Spleen (tissue), 13 donors: ENCODE measurements at regions of chr3 and their contacts with region 1.

Region 1: GRCh38 chr3:186783073-186783730 is at the start of gene EIF4A2:
- DNase-seq: peak; percentile 97
- H3K4me3 ChIP-seq: peak within 1 kb of the TSS; percentile 66 to 94 (median 88)
- H3K27ac ChIP-seq: peak within 1 kb of the TSS; percentile 95 to 99 (median 98)
- H3K4me1 ChIP-seq: peaks cover 35 to 49% (median 40%) of the 10 kb centered on the region in 6 donors
- H3K27me3 ChIP-seq: no peaks in the 10 kb centered on the region
- CTCF ChIP-seq: peak in 1 of 11 experiments; percentile 5
- POLR2A ChIP-seq: peak; percentile 87 to 89 (median 87)
- total RNA-seq, gene EIF4A2: 255 to 512 (median 355) TPM

Region 2: DNA sequence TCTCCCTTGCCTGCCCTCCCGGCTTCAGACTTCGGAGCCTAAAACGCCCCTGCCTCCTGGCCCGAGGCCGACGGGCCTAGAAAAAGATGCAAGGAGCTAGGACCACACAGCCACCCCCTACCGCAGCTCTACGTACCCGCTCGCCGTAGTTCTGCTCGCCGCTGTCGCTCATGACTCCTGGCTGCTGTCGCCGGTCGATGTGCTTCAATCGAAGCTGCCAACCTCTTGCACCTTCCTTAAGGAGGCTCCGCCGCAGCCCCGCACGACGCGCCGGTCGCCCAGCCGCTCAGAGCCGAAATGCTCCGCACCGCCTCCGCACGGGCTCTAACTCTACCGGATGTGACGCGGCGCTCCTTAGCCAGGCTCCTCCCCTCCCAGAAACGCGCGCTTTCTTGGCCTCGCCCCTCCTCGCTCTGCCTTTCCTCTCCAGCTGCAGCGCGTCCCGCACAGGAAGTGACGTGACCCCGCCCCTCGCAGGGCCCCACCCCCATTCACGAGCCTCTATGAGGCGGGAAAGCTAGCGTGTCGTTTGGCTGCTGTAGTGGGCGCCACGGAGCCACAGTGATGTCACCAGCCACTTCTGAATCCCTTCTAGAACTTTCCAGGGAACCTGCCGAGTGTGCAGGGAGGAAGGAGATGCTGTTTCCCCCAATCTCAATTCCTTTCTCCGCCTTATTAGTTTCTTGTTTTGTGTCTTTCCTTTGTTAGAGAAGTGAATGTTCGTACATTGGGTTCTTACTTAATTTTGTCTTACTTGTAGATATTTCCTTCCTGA is 845.3 kb before region 1 on chr3 and contains the start of gene TRA2B:
- intact Hi-C with region 1: loop called (anchors 10 kb)
- DNase-seq: peak; percentile 100
- H3K4me3 ChIP-seq: peak within 1 kb of the TSS; percentile 61 to 84 (median 68)
- H3K27ac ChIP-seq: peak within 1 kb of the TSS; percentile 94 to 100 (median 100)
- H3K4me1 ChIP-seq: peaks cover 17 to 45% (median 38%) of the 10 kb centered on the region in 6 donors
- H3K27me3 ChIP-seq: no peaks in the 10 kb centered on the region
- CTCF ChIP-seq: peak in 8 of 11 experiments; percentile 5 to 65 (median 42)
- POLR2A ChIP-seq: peak; percentile 99 to 100 (median 99)
- total RNA-seq, gene TRA2B: 136 to 235 (median 147) TPM

Region 3: DNA sequence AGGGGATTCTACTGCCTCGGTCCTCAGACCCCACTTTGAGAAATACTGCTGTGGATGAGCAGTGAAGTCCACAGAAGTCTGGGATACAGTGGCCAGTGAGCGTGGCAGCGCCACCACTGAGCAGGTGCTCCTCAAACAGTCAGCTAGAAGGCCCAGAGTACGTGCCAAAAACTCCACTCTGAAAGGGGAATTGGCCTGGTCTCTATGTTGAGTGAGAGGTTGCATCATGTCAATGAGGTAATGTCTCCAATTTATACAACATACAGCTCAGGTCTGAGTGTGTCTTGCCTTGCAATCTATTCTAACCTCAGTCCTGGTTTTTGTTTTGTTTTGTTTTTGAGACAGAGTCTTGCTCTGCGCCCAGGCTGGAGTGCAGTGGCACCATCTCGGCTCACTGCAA is 621.0 kb before region 1 on chr3:
- intact Hi-C with region 1: no loop called
- DNase-seq: no peak
- H3K4me3 ChIP-seq: no peak overlapping the region
- H3K27ac ChIP-seq: peak overlapping the region in 2 of 8 donors; percentile 10 to 41
- H3K4me1 ChIP-seq: no peaks in the 10 kb centered on the region
- H3K27me3 ChIP-seq: peaks cover 0 to 11% (median 0%) of the 10 kb centered on the region in 7 donors
- CTCF ChIP-seq: no peak
- POLR2A ChIP-seq: no peak

Region 4: DNA sequence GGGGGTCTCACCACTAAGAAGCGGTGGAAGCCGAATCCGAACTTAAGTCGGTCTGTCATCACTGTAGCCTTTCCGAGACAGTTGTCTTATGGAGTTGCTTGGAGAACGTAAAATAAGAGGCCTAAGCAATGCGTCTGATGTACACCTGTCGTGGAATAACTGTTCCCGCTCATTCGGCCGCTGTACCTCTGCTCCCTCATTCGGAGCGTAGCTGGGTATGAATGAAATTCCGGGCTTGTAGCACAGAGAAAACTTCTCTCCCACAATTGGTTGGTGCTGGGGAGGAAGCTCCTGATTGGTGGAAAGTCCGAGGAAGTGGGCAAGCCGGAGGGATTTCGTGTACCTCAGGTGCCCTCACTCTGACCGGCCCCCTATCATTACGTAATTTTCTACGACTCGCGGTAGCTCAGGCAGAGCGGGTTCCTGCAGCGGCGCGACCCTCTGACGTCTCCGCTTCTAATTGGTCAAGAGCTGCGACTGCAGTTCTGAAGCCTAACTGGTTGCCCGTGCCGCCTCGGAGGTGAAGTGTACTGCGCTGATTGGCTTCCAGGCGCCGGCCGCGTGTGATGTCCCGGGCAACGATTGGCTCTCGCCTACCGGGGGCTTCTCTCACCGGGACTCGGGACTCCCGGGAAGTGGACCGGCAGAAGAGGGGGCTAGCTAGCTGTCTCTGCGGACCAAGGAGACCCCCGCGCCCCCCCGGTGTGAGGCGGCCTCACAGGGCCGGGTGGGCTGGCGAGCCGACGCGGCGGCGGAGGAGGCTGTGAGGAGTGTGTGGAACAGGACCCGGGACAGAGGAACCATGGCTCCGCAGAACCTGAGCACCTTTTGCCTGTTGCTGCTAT is 212.9 kb before region 1 on chr3 and contains the start of gene DNAJB11:
- intact Hi-C with region 1: loop called (anchors 10 kb)
- DNase-seq: peak; percentile 99
- H3K4me3 ChIP-seq: peak within 1 kb of the TSS; percentile 68 to 92 (median 80)
- H3K27ac ChIP-seq: peak within 1 kb of the TSS; percentile 87 to 97 (median 93)
- H3K4me1 ChIP-seq: peaks cover 27 to 87% (median 58%) of the 10 kb centered on the region in 6 donors
- H3K27me3 ChIP-seq: no peaks in the 10 kb centered on the region
- CTCF ChIP-seq: peak in 5 of 11 experiments; percentile 12 to 51 (median 38)
- POLR2A ChIP-seq: peak; percentile 38 to 87 (median 59)
- total RNA-seq, gene DNAJB11: 33.0 to 98.2 (median 48.6) TPM

Region 5: DNA sequence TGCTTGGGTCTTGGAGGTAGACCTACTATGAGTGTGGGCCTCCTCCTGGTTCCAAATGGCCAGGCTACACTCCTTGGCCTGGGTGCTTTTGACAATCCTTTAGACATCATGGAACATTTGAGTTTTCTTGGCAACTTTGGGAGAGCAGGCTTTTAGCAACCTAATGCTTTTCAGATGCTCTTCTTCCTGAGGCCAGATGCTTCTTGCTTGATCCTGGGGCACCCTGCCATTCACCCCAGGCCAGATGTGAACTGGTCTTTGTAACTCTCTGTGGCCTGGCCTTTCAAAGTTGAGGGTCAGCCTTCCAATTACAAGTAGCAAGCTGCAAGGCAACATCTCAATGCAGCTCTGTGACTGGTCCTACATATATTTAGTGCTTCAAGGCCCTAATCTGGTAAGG is 454.5 kb after region 1 on chr3:
- intact Hi-C with region 1: no loop called
- DNase-seq: no peak
- H3K4me3 ChIP-seq: no peak overlapping the region
- H3K27ac ChIP-seq: no peak overlapping the region
- H3K4me1 ChIP-seq: no peaks in the 10 kb centered on the region
- H3K27me3 ChIP-seq: no peaks in the 10 kb centered on the region
- CTCF ChIP-seq: no peak
- POLR2A ChIP-seq: no peak